PC-9 (cell line): ENCODE measurements at regions of chr2 and their contacts with region 1.

Region 1: DNA sequence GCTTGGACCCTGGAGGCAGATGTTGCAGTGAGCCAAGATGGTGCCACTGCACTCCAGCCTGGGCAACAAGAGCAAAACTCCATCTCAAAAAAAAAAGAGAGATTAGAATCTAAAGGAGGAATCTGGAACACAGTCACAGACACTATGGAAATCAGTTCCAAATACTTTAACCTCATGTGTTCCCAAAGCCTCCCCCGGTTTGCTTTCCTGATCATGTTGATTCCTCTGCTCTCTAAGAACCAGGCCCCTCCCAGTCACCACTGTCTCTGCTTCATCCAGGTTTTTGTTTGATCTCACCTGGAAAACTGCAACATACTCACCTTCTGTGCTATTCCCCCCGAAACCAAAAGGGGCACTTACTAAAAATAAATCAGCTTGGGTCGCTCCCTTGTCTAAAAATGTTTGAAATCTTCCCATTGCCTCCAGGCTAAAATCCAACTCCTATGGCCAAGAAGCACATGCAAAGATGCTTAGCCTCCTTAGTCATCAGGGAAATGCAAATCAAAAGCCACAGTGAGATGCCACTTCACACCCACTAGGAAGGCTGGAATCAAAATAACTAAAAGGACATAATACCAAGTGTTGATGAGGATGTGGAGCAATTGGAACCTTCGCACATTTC is 6.2 kb upstream of the NEU2 start:
- DNase-seq: peak; percentile 69 to 97
- H3K4me3 ChIP-seq: no peak overlapping the region
- H3K27ac ChIP-seq: peak overlapping the region; percentile 72
- H3K4me1 ChIP-seq: peaks cover 45% of the 10 kb centered on the region
- H3K27me3 ChIP-seq: no peaks in the 10 kb centered on the region
- CTCF ChIP-seq: peak; percentile 51

Region 2: DNA sequence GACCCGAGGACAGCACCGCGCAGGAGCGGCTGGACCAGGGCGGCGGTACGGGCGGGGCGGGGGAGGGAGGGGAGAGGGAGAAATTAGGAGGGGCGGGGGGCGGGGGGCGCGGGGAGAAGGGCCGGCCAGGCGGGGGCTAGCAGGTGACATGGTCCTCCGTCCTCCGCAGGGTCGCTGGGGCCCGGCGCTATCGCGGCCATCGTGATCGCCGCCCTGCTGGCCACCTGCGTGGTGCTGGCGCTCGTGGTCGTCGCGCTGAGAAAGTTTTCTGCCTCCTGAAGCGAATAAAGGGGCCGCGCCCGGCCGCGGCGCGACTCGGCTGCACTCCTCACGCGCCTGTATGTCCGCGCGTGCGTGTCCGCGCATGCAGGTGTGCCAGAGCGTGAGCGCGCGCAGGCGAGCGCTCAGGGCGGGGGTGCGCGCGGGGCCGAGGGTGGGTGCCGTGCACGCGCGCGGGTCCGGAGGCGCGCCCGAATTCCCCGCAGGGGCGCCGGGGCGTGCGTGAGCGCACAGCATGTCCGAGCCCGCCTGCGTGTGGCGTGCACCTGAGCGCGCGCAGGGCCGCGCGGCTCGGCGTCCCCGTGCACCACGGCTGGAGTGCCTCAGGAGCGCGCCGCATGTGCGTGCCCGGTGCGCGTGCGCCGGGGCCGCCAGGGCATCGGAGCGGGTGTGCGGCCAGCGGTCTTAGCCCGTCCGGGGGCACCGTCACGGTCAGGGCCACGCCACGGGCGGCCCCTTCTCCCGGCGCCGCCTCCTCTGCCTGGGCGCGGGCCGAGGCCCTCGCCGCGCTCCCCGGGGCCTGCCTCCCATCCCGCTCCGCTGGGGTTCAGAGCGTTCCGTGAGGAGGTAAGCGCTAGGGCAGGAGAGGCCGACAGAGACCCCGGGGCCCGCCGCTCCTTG is 150.0 kb before region 1 on chr2:
- CTCF ChIA-PET with region 1: no interaction called
- POLR2A ChIA-PET with region 1: no interaction called
- intact Hi-C with region 1: loop called (anchors 1 kb)
- DNase-seq: peak in 1 of 2 experiments; percentile 61
- H3K4me3 ChIP-seq: peak overlapping the region; percentile 54; the same call in 1 of the 2 replicates
- H3K27ac ChIP-seq: no peak overlapping the region
- H3K4me1 ChIP-seq: no peaks in the 10 kb centered on the region
- H3K27me3 ChIP-seq: no peaks in the 10 kb centered on the region
- CTCF ChIP-seq: no peak

Region 3: DNA sequence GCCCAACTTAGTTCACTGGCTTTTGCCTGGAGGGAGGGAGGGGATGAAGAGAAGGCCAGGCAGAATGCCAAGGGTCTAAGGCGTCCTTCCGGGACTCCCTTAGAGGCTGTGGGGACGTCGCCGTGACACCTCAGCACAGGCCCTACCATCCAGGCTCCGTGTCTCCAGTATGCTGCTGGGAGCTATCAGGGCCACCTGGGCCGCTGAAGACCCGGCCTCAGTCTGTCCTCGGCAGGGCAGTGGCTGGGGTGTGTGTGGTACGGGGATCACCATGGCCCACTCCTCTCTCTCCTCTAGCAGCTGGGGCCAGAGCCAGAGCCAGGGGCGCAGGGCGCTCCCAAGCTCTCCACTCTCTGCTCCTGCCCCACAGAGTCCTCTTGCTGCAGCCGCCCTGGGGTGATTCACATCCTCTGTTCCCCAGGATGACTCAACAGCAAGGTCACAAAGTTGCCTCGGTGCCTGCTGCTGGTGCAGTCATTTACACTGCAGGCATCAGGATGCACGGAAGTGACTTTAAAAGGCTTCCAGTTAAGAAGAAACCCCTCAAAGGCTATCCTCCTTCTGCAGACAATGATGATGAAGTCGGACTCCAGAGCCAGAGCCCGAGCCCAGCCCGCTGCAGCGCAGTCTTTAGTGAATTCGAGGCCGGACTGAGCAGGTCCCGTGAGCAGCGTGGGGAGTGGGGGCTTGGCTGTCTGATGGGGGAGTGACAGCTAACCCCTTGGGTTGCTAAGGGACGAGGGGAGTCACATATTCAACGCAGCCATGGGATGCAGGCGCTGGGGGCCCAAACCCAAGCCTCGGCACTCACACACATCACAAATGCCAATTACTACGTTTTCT is 124.3 kb before region 1 on chr2:
- CTCF ChIA-PET with region 1: no interaction called
- POLR2A ChIA-PET with region 1: no interaction called
- intact Hi-C with region 1: loop called (anchors 5 kb)
- DNase-seq: peak; percentile 86 to 92
- H3K4me3 ChIP-seq: peak overlapping the region; percentile 26; the same call in 1 of the 2 replicates
- H3K27ac ChIP-seq: peak overlapping the region; percentile 77
- H3K4me1 ChIP-seq: peaks cover 36% of the 10 kb centered on the region
- H3K27me3 ChIP-seq: no peaks in the 10 kb centered on the region
- CTCF ChIP-seq: no peak

Region 4: DNA sequence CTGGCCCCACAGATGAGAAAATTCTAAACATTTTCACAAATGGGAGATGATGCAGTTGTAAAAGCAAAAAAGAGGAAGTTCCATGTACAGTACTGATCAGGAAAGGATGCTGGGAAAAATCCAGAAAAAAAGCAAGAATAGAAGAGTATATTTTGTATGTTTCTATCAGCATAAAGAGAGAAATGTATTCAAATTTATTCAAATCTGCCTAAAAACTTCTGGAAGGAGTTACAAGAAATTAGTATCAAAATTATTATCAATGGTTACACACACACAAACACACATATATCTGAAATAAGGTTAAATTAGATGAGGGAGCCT is 37.6 kb before region 1 on chr2:
- CTCF ChIA-PET with region 1: no interaction called
- POLR2A ChIA-PET with region 1: no interaction called
- intact Hi-C with region 1: loop called (anchors 1 kb)
- DNase-seq: no peak
- H3K4me3 ChIP-seq: 0 out of 2 replicates have a peak overlapping the region, but pooled peaks have one; percentile 19
- H3K27ac ChIP-seq: peak overlapping the region; percentile 95
- H3K4me1 ChIP-seq: peaks cover 50% of the 10 kb centered on the region
- H3K27me3 ChIP-seq: no peaks in the 10 kb centered on the region
- CTCF ChIP-seq: no peak

Region 5: DNA sequence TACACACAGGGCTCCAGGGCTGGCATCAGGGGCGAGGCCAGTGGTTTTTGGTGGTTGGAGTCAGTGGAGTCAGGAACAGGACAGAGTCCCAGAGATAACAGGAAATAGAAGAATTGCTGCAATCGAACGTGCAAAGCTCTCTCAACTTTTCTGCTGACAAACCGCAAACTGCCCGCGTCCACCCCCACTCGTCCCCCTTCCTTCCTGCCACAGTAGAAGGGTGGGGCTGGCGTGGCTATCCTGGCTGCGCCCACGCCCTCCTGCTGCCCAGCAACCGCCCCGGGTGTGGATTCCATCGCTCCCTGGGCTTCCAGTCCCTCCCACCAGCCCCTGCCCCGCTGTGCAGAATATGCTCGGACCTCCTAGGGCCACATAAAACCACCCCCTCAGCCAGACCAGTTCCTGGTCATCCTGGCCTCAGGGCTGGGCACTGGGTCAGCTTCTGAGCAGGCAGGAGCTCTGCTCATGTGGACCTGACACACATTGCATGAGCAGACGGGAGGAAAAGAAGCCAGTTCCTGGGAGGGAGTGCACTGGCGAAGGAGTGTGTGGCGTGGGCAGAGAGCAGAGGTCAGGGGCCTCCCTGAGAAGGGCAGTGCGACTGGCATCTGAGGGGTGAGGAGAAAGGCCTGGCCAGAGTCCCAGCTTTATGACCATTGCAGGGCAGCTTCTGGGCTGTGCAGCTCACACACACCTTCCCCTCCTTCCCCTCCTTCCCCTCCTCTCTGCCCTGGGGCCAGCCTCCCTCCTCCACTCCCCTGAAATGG is 139.8 kb after region 1 on chr2:
- CTCF ChIA-PET with region 1: interaction called, 4 read pairs
- POLR2A ChIA-PET with region 1: interaction called, 7 read pairs
- intact Hi-C with region 1: loop called (anchors 1 kb)
- DNase-seq: peak; percentile 97 to 99
- H3K4me3 ChIP-seq: no peak overlapping the region
- H3K27ac ChIP-seq: peak overlapping the region; percentile 76
- H3K4me1 ChIP-seq: peaks cover 53% of the 10 kb centered on the region
- H3K27me3 ChIP-seq: no peaks in the 10 kb centered on the region
- CTCF ChIP-seq: no peak

Region 6: GRCh38 chr2:233210843-233211547 is 184.7 kb after region 1 on chr2:
- CTCF ChIA-PET with region 1: no interaction called
- POLR2A ChIA-PET with region 1: no interaction called
- intact Hi-C with region 1: loop called (anchors 1 kb)
- DNase-seq: peak; percentile 92 to 97
- H3K4me3 ChIP-seq: no peak overlapping the region
- H3K27ac ChIP-seq: peak overlapping the region; percentile 28; the same call in 1 of the 2 replicates
- H3K4me1 ChIP-seq: peaks cover 57% of the 10 kb centered on the region
- H3K27me3 ChIP-seq: no peaks in the 10 kb centered on the region
- CTCF ChIP-seq: no peak